ENCODE measurements at regions of chr1 and their contacts with region 1.

Region 1: DNA sequence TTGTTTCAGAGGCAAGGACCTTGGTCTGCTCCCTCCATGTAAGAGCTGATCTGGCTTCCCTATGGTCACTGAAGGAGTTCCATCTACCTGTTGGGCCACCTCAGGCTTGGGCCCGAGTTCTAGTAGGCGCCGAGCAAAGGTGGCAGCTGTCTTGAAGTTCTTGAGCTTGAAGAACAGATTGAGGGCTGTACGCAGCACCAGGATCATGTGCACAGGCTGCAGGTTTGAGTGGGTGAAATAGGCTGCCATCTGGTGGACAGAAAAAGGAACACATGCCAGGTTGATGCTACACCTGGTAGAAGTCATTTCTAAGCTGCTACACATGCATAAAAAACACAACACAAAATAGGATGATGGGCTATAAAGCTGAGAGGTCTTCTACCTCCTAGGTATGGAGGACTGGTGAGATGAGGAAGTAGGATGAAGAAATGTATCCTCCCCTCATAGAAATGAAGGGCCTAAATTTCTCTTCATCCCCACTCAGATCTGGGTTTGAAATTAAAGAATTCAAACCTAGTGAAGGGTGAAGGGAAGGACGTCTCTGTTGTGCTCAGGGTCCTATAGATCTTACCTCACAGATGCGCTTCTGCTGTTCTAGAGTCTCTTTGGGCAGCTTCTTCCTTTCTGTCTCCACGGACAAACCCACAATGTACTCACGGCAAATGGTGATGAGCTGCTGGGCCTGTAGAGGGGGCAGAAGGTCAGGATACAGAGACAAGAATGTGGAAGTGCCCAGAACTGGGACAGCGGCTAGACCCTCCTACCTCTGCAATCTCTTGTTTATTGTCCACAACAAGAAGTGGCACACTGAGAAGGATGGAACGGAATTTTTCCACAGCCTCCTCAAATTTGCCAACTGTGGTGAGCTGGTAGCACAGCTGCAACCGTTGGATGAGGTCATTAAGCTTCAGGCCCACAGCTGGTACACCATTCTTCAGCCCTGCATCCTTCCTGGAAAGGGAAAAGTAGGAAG is 6.6 kb upstream of the PEX19 start:
- DNase-seq: peak; percentile 43 to 89
- ATAC-seq: peak; percentile 90 to 97 (median 93)
- H3K4me3 ChIP-seq: no peak overlapping the region
- H3K4me3 Mint-ChIP-seq: no peak overlapping the region
- H3K27ac ChIP-seq: no peak overlapping the region
- H3K27ac Mint-ChIP-seq: peak overlapping the region; percentile 49 to 59
- H3K4me1 ChIP-seq: no peaks in the 10 kb centered on the region
- H3K4me1 Mint-ChIP-seq: no peaks in the 10 kb centered on the region
- H3K27me3 ChIP-seq: no peaks in the 10 kb centered on the region
- H3K27me3 Mint-ChIP-seq: no peaks in the 10 kb centered on the region
- CTCF ChIP-seq: peak; percentile 79

Region 2: DNA sequence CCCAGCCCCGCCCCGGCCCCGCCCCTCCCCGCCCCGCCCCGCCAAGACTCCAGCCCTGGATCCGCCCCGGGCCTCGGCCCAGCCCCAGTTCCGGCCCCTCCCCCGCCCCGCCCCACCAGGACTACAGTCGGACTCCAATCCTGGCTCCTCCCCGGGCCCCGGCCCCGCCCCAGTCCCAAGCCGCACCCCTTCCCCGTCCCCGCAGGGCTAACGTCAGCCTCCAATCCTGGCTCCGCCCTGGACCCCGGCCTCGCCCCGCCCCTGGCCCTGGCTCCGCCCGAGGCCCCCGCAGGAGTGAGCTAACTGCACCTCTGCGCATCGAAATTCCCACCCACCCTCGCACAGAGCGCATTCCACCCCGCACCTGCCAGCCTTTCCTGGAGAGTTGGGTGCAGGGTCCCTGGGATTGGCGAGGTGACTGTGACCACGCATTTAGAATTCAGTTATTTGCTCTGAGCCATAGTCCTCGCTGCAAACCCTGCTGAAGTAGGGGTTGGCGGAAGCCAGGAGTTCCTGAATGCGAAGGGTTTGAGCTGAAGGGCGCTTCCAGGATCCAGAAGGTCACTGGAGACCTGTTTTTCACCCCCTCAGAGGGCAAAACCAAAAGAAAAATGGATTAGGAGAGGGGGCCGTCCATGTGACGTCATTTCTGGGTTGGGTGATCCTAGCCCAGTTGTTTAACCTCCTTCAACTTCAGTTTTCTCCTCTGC is 192.5 kb before region 1 on chr1:
- intact Hi-C with region 1: loop called (anchors 1 kb)
- DNase-seq: peak; percentile 89 to 97
- ATAC-seq: peak; percentile 85 to 93 (median 88)
- H3K4me3 ChIP-seq: peak overlapping the region; percentile 39
- H3K4me3 Mint-ChIP-seq: peak overlapping the region; percentile 78
- H3K27ac ChIP-seq: peak overlapping the region; percentile 87
- H3K27ac Mint-ChIP-seq: peak overlapping the region; percentile 84 to 89
- H3K4me1 ChIP-seq: peaks cover 45% of the 10 kb centered on the region
- H3K4me1 Mint-ChIP-seq: peaks cover 39 to 56% of the 10 kb centered on the region in 2 donors
- H3K27me3 ChIP-seq: no peaks in the 10 kb centered on the region
- H3K27me3 Mint-ChIP-seq: peaks cover 0 to 2% of the 10 kb centered on the region in 2 donors
- CTCF ChIP-seq: no peak

Region 3: GRCh38 chr1:160251687-160252526 is 39.6 kb before region 1 on chr1:
- intact Hi-C with region 1: no loop called
- DNase-seq: peak; percentile 33 to 79
- ATAC-seq: peak; percentile 87 to 99 (median 93)
- H3K4me3 ChIP-seq: no peak overlapping the region
- H3K4me3 Mint-ChIP-seq: no peak overlapping the region
- H3K27ac ChIP-seq: no peak overlapping the region
- H3K27ac Mint-ChIP-seq: peak overlapping the region; percentile 2 to 76
- H3K4me1 ChIP-seq: no peaks in the 10 kb centered on the region
- H3K4me1 Mint-ChIP-seq: peaks cover 6 to 26% of the 10 kb centered on the region in 2 donors
- H3K27me3 ChIP-seq: no peaks in the 10 kb centered on the region
- H3K27me3 Mint-ChIP-seq: no peaks in the 10 kb centered on the region
- CTCF ChIP-seq: peak; percentile 61

Measured in natural killer cell (primary cell).